ENCODE measurements at regions of chr19 and their contacts with region 1.

Region 1: DNA sequence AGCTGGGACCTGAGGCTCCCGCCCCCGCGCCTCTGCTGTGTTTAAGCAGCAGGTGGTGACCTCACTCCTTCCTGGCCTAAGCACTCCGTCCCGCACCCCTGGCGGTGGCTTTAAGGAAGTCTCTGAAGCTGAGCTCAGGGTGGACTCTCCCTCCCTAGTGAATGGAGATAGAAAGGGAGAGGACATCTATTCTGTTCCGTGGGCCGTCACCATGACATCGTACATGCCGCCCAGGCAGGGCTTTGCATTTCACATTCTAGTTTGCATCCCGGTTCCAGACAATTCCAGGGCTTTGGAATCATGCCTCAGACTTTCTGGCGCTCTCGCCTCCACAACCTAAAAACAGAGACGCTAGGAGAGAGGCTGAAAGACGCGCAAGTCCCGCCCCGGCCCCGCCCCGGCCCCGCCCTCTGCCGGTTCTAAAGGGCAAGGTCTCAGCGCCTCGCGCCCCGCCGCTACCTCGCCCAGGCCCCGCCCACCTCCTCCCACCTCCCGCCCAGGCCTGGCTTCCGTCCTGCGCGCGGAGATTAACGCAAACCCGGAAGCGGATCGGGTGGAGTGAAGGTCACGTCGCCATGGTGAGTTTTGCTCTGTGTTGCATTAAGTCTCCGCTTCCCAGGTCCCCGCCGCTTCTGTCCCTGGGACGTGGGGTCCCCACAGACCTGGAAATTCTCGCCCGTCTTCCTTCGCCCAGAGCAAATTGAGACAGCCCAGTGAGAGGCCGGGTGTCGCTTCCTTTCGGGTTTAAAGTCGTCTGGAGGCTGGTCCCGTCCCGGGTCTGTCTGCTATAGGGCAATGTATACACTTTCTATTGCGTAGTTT is at the start of gene ZNF808:
- DNase-seq: peak; percentile 98
- H3K4me3 ChIP-seq: peak within 1 kb of the TSS; percentile 67 to 80 (median 76)
- H3K27ac ChIP-seq: peak within 1 kb of the TSS; percentile 90 to 95 (median 93)
- H3K4me1 ChIP-seq: peaks cover 0 to 12% (median 9%) of the 10 kb centered on the region in 4 donors
- H3K27me3 ChIP-seq: no peaks in the 10 kb centered on the region
- CTCF ChIP-seq: peak; percentile 64 to 85 (median 80)
- EP300 ChIP-seq: no peak
- POLR2A ChIP-seq: peak; percentile 34 to 51
- total RNA-seq, gene ZNF808: 13.0 to 26.6 (median 18.7) TPM

Region 2: GRCh38 chr19:52453324-52454094 is 73.8 kb before region 1 on chr19 and contains the start of gene ZNF578:
- intact Hi-C with region 1: loop called (anchors 5 kb)
- DNase-seq: peak; percentile 85
- H3K4me3 ChIP-seq: peak within 1 kb of the TSS; percentile 42 to 60 (median 51)
- H3K27ac ChIP-seq: peak within 1 kb of the TSS in 1 of 4 donors; percentile 22
- H3K4me1 ChIP-seq: peaks cover 0 to 10% (median 3%) of the 10 kb centered on the region in 4 donors
- H3K27me3 ChIP-seq: peaks cover 0 to 8% (median 0%) of the 10 kb centered on the region in 3 donors
- CTCF ChIP-seq: no peak
- EP300 ChIP-seq: no peak
- POLR2A ChIP-seq: no peak
- total RNA-seq, gene ZNF578: 1.2 to 2.5 (median 2.4) TPM

Region 3: GRCh38 chr19:52570000-52570861 is 42.9 kb after region 1 on chr19 and contains the start of gene ZNF701:
- intact Hi-C with region 1: loop called (anchors 5 kb)
- DNase-seq: peak; percentile 98
- H3K4me3 ChIP-seq: peak within 1 kb of the TSS; percentile 57 to 84 (median 64)
- H3K27ac ChIP-seq: peak within 1 kb of the TSS; percentile 83 to 87 (median 85)
- H3K4me1 ChIP-seq: peaks cover 0 to 21% (median 13%) of the 10 kb centered on the region in 4 donors
- H3K27me3 ChIP-seq: no peaks in the 10 kb centered on the region
- CTCF ChIP-seq: peak; percentile 13 to 37 (median 24)
- EP300 ChIP-seq: no peak
- POLR2A ChIP-seq: peak; percentile 88 to 90
- total RNA-seq, gene ZNF701: 12.4 to 22.4 (median 14.8) TPM

Region 4: DNA sequence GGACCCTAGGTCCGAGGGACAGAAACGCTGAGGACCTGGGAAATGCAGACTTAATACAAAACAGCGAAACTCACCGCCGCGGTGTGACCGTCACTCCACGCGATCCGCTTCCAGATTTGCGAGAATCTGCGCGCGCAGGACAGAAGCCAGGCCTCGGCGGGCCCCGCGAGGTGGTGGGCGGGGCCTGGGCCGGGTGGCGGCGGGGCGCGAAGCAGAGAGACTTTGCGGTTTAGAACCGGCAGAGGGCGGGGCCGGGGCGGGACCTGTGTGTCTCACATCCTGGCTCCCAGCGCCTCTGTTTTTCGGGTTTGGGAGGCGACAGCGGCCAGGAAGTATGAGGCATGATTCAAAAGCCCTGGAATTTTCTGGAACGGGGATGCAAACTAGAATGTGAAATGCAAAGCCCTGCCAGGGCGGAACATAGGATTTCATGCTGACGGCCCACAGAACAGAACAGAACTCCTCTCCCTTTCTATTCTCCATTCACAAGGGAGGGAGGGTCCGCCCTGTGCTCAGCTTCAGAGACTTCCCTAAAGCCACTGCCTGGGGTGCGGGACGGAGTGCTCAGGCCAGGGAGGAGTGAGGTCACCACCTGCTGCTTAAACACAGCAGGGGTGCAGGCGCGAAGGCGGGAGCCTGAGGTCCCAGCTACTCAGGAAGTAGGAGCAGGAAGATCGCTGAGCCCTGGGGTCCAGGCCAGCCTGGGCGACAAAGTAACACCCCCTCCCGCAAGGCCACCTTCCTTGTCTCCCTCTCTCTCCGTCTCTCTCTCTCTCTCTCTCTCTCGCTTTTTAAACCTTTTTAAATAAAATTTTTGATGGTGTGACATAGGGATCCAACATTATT is 163.2 kb after region 1 on chr19:
- intact Hi-C with region 1: loop called (anchors 5 kb)
- DNase-seq: peak; percentile 98
- H3K4me3 ChIP-seq: peak overlapping the region; percentile 59 to 71 (median 64)
- H3K27ac ChIP-seq: peak overlapping the region; percentile 85 to 91 (median 88)
- H3K4me1 ChIP-seq: peaks cover 0 to 22% (median 19%) of the 10 kb centered on the region in 4 donors
- H3K27me3 ChIP-seq: no peaks in the 10 kb centered on the region
- CTCF ChIP-seq: peak in 3 of 4 experiments; percentile 18 to 49 (median 33)
- EP300 ChIP-seq: no peak
- POLR2A ChIP-seq: peak; percentile 60 to 73

Region 5: DNA sequence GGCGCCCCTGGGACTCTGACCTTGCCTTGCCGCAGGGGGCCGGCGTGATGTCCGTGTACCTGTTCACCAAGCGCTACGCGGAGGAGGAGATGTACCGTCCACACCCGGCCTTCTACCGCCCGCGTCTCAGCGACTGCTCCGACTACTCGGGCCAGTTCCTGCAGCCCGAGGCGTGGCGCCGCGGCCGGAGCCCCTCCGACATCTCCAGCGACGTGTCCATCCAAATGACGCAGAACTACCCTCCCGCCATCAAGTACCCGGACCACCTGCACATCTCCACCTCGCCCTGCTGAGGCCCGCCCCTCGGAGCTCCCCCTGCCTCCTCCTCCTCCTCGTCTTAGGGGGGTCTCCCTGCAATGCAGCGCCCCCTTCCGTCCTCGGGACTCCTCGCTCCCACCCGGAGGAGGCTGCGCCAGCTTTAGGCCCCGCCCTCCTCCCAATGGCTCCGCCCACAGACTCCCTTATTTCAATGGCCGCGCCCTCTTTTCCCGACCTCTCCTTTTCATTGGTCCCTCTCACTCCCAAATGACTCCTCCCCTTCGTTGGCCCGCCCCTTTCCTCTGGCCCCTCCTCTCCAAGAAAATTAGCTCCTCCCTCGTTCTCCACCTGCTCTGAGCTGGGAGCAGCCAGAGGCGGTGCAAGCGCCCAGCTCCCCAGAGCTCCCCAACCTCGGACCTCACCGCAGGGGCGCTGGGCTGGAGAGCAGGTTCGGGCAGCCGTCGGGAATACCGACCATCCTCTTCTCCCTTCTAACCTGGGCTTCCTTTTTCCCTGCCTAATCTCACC is 1414.8 kb after region 1 on chr19:
- intact Hi-C with region 1: no loop called
- DNase-seq: no peak
- H3K4me3 ChIP-seq: no peak overlapping the region
- H3K27ac ChIP-seq: no peak overlapping the region
- H3K4me1 ChIP-seq: no peaks in the 10 kb centered on the region
- H3K27me3 ChIP-seq: peaks cover 19 to 61% (median 35%) of the 10 kb centered on the region in 3 donors
- CTCF ChIP-seq: no peak
- EP300 ChIP-seq: no peak
- POLR2A ChIP-seq: no peak

Measured in sigmoid colon (tissue), 7 donors.